OCI-LY7 (cell line): ENCODE measurements at regions of chr5 and their contacts with region 1.

Region 1: DNA sequence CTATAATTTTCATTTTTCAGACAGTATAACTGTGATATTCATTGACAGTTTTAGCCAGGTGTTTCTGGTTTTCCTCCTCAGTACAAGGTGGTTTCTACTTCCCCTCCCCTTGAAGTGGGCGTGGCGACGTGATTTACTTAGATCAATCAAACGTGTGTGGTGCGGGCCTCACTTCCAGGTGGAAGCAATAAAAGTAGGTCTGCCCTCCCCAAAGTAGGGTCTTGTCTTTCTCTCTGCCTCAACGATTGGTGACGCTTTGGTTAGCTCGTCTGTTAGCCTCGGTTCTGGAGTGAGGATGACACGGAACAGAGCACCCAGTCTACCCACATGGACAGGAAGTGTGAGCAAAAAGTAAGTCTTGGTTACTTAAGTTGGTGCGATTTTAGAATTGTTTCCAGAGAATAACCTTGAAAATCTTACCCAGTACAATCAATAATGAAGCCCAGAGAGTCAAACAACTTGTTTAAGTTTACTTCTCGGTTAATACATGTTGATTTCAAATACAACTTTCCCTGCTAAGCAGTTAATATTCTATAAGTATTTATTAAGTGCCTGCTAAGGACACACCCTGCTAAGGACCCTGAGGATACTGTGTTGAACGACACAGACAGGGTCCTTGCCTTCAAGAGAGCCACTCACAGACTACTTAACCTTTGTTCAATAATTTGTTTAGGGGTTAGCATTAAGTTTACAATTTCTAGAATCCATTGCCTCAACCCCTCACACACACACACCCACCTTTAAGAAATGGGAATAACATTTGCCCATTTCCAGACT is 48.4 kb downstream of the COX7C start:
- DNase-seq: peak; percentile 84
- H3K4me3 ChIP-seq: peak overlapping the region; percentile 69
- H3K27ac ChIP-seq: peak overlapping the region; percentile 72
- H3K4me1 ChIP-seq: peaks cover 22% of the 10 kb centered on the region
- CTCF ChIP-seq: no peak

Region 2: GRCh38 chr5:86617756-86618576 is 48.2 kb before region 1 on chr5 and contains the start of gene COX7C:
- CTCF ChIA-PET with region 1: no interaction called
- POLR2A ChIA-PET with region 1: interaction called, 6 read pairs
- intact Hi-C with region 1: loop called (anchors 2 kb)
- DNase-seq: peak; percentile 98
- H3K4me3 ChIP-seq: peak within 1 kb of the TSS; percentile 98
- H3K27ac ChIP-seq: peak within 1 kb of the TSS; percentile 68
- H3K4me1 ChIP-seq: peaks cover 17% of the 10 kb centered on the region
- CTCF ChIP-seq: no peak
- total RNA-seq, gene COX7C: 282 and 290 TPM in 2 replicates

Region 3: GRCh38 chr5:86765778-86766502 is 99.8 kb after region 1 on chr5:
- CTCF ChIA-PET with region 1: no interaction called
- POLR2A ChIA-PET with region 1: no interaction called
- intact Hi-C with region 1: no loop called
- DNase-seq: no peak
- H3K4me3 ChIP-seq: no peak overlapping the region
- H3K27ac ChIP-seq: no peak overlapping the region
- H3K4me1 ChIP-seq: no peaks in the 10 kb centered on the region
- CTCF ChIP-seq: no peak